ENCODE measurements at regions of chr17 and their contacts with region 1.

Region 1: GRCh38 chr17:19377602-19378392 is 501 bp upstream of the MAPK7 start:
- DNase-seq: peak; percentile 83 to 98 (median 90)
- ATAC-seq: peak; percentile 87
- H3K4me3 ChIP-seq: peak overlapping the region; percentile 100
- H3K4me3 Mint-ChIP-seq: peak overlapping the region; percentile 100
- H3K27ac ChIP-seq: peak overlapping the region; percentile 75 to 93
- H3K27ac Mint-ChIP-seq: peak overlapping the region; percentile 90
- H3K4me1 ChIP-seq: peaks cover 31% of the 10 kb centered on the region
- H3K4me1 Mint-ChIP-seq: peaks cover 11% of the 10 kb centered on the region
- H3K27me3 ChIP-seq: no peaks in the 10 kb centered on the region
- H3K27me3 Mint-ChIP-seq: no peaks in the 10 kb centered on the region
- CTCF ChIP-seq: no peak

Region 2: GRCh38 chr17:19447085-19447583 is 69.3 kb after region 1 on chr17:
- CTCF ChIA-PET with region 1: interaction called, 8 read pairs
- POLR2A ChIA-PET with region 1: no interaction called
- intact Hi-C with region 1: loop called in 1 of 2 experiments (anchors 5 kb)
- DNase-seq: peak; percentile 26 to 85 (median 62)
- ATAC-seq: peak; percentile 59
- H3K4me3 ChIP-seq: no peak overlapping the region
- H3K4me3 Mint-ChIP-seq: no peak overlapping the region
- H3K27ac ChIP-seq: no peak overlapping the region
- H3K27ac Mint-ChIP-seq: no peak overlapping the region
- H3K4me1 ChIP-seq: no peaks in the 10 kb centered on the region
- H3K4me1 Mint-ChIP-seq: no peaks in the 10 kb centered on the region
- H3K27me3 ChIP-seq: no peaks in the 10 kb centered on the region
- H3K27me3 Mint-ChIP-seq: peaks cover 25% of the 10 kb centered on the region
- CTCF ChIP-seq: peak; percentile 96

Region 3: GRCh38 chr17:19507775-19508576 is 130.2 kb after region 1 on chr17:
- CTCF ChIA-PET with region 1: no interaction called
- POLR2A ChIA-PET with region 1: no interaction called
- intact Hi-C with region 1: loop called (anchors 5 kb)
- DNase-seq: peak; percentile 78 to 93 (median 88)
- ATAC-seq: peak; percentile 75
- H3K4me3 ChIP-seq: peak overlapping the region; percentile 80
- H3K4me3 Mint-ChIP-seq: peak overlapping the region; percentile 95
- H3K27ac ChIP-seq: peak overlapping the region; percentile 26 to 53
- H3K27ac Mint-ChIP-seq: peak overlapping the region; percentile 97
- H3K4me1 ChIP-seq: peaks cover 14% of the 10 kb centered on the region
- H3K4me1 Mint-ChIP-seq: peaks cover 10% of the 10 kb centered on the region
- H3K27me3 ChIP-seq: no peaks in the 10 kb centered on the region
- H3K27me3 Mint-ChIP-seq: peaks cover 11% of the 10 kb centered on the region
- CTCF ChIP-seq: no peak

Region 4: DNA sequence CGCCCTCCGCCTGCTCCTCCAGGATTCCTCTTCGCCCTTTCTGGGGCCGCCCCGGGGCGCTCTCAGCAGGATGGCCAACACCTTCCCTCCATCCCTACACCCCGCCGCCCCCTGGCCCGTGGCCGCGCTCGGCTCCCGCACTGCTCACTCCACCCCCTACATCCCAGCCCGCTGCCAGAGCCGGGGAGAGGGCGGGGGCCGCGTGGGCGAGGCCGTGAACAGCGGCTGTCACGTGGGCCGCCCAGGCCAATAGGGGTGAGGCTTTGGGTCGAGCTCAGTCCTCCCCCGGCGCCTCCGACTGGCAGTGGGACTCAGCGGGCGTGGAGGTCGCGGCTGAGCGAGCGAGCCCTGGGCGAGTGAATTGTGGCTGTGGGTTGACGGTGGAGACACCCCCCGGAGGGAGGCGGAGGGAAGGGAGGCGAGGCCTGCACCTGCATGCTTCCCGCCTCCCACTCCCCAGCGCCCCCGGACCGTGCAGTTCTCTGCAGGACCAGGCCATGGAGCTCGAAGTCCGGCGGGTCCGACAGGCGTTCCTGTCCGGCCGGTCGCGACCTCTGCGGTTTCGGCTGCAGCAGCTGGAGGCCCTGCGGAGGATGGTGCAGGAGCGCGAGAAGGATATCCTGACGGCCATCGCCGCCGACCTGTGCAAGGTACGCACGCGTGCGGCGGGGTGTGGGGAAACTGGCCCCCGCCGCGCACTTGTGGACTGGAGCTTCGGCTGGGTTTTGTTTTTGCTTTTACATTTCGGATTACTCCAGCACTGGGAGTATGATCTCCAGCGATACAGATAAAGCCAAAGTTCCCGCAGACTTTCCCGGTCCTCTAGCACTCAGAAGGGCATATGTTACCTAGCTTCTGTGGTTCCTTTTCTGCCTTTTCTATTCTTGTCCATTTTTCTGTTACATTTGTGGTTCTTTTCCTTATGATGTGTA is 270.9 kb after region 1 on chr17 and contains the start of gene ALDH3A2:
- CTCF ChIA-PET with region 1: no interaction called
- POLR2A ChIA-PET with region 1: interaction called, 15 read pairs
- intact Hi-C with region 1: loop called in 1 of 2 experiments (anchors 5 kb)
- DNase-seq: peak; percentile 80 to 95 (median 90)
- ATAC-seq: peak; percentile 95
- H3K4me3 ChIP-seq: peak within 1 kb of the TSS; percentile 85
- H3K4me3 Mint-ChIP-seq: peak within 1 kb of the TSS; percentile 95
- H3K27ac ChIP-seq: peak within 1 kb of the TSS; percentile 45 to 61
- H3K27ac Mint-ChIP-seq: peak within 1 kb of the TSS; percentile 88
- H3K4me1 ChIP-seq: peaks cover 23% of the 10 kb centered on the region
- H3K4me1 Mint-ChIP-seq: peaks cover 42% of the 10 kb centered on the region
- H3K27me3 ChIP-seq: no peaks in the 10 kb centered on the region
- H3K27me3 Mint-ChIP-seq: no peaks in the 10 kb centered on the region
- CTCF ChIP-seq: no peak
- total RNA-seq, gene ALDH3A2: 20.0 to 20.9 TPM

Region 5: GRCh38 chr17:19771971-19772630 is 394.3 kb after region 1 on chr17:
- CTCF ChIA-PET with region 1: no interaction called
- POLR2A ChIA-PET with region 1: interaction called, 18 read pairs
- intact Hi-C with region 1: loop called in 1 of 2 experiments (anchors 5 kb)
- DNase-seq: peak in 12 of 14 experiments; percentile 9 to 88 (median 40)
- ATAC-seq: peak; percentile 89
- H3K4me3 ChIP-seq: peak overlapping the region; percentile 34
- H3K4me3 Mint-ChIP-seq: peak overlapping the region; percentile 75
- H3K27ac ChIP-seq: peak overlapping the region; percentile 32 to 61
- H3K27ac Mint-ChIP-seq: peak overlapping the region; percentile 93
- H3K4me1 ChIP-seq: peaks cover 60% of the 10 kb centered on the region
- H3K4me1 Mint-ChIP-seq: peaks cover 81% of the 10 kb centered on the region
- H3K27me3 ChIP-seq: no peaks in the 10 kb centered on the region
- H3K27me3 Mint-ChIP-seq: no peaks in the 10 kb centered on the region
- CTCF ChIP-seq: no peak

Measured in CD4-positive, alpha-beta T cell (primary cell).